MCF 10A (cell line): ENCODE measurements at regions of chr3 and their contacts with region 1.

Region 1: GRCh38 chr3:61725851-61726333 is 164.5 kb downstream of the PTPRG start:
- DNase-seq: peak; percentile 7
- H3K4me3 Mint-ChIP-seq: no peak overlapping the region
- H3K27ac Mint-ChIP-seq: no peak overlapping the region
- H3K4me1 Mint-ChIP-seq: peaks cover 16% of the 10 kb centered on the region
- H3K27me3 Mint-ChIP-seq: no peaks in the 10 kb centered on the region
- CTCF ChIP-seq: no peak

Region 2: GRCh38 chr3:60839246-60839645 is 886.6 kb before region 1 on chr3:
- CTCF ChIA-PET with region 1: no interaction called
- POLR2A ChIA-PET with region 1: no interaction called
- intact Hi-C with region 1: loop called (anchors 10 kb)
- DNase-seq: no peak
- H3K4me3 Mint-ChIP-seq: no peak overlapping the region
- H3K27ac Mint-ChIP-seq: no peak overlapping the region
- H3K4me1 Mint-ChIP-seq: peaks cover 4% of the 10 kb centered on the region
- H3K27me3 Mint-ChIP-seq: no peaks in the 10 kb centered on the region
- CTCF ChIP-seq: no peak